ENCODE measurements at regions of chr10 and their contacts with region 1.

Region 1: GRCh38 chr10:4767033-4767814 is 58.8 kb upstream of the AKR1E2 start:
- DNase-seq: peak; percentile 46
- H3K4me3 ChIP-seq: no peak overlapping the region
- H3K27ac ChIP-seq: peak overlapping the region; percentile 96
- H3K4me1 ChIP-seq: peaks cover 63% of the 10 kb centered on the region
- H3K27me3 ChIP-seq: no peaks in the 10 kb centered on the region
- CTCF ChIP-seq: peak; percentile 71 to 76

Region 2: GRCh38 chr10:3222065-3222464 is 1545.2 kb before region 1 on chr10:
- CTCF ChIA-PET with region 1: interaction called, 5 read pairs
- dilution Hi-C with region 1: loop called (anchors 25 kb)
- in situ Hi-C with region 1: loop called in 1 of 2 experiments (anchors 25 kb)
- intact Hi-C with region 1: no loop called
- DNase-seq: no peak
- H3K4me3 ChIP-seq: no peak overlapping the region
- H3K27ac ChIP-seq: no peak overlapping the region
- H3K4me1 ChIP-seq: peaks cover 21% of the 10 kb centered on the region
- H3K27me3 ChIP-seq: no peaks in the 10 kb centered on the region
- CTCF ChIP-seq: no peak

Region 3: DNA sequence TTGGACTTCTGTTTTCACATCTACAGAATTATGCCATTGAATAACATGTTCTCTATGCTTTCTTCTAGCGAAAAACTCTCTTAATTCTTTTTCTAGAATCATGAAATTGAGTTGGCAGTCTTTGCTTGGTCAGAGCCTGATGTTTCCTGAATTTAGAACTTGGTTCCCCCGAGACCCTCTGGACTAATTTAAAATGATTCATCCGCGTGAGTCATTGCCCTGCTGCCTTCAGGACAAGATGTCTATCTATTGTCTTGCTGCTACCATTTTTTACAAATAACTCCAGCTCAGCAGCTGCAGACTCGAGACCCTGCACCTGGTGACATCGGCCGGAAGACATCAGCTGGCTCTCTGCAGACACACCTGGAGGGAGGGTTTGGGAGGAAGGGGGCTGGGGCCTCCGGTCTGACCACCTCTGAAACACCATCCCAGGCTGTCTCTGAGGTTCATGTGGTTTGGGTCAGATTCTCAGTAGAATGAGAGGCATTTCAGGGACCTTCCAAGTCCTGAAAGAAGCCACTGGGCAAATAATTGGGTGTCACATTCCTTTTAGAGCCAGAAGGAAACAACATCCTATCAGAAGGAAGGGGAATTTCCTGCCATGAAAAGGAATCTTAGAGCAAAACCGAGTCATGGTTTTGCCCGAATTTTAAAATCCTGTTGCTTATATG is 961.3 kb before region 1 on chr10:
- CTCF ChIA-PET with region 1: no interaction called
- dilution Hi-C with region 1: loop called (anchors 10 kb)
- in situ Hi-C with region 1: no loop called
- intact Hi-C with region 1: loop called (anchors 1 kb)
- DNase-seq: peak; percentile 90
- H3K4me3 ChIP-seq: no peak overlapping the region
- H3K27ac ChIP-seq: peak overlapping the region; percentile 100
- H3K4me1 ChIP-seq: peaks cover 49% of the 10 kb centered on the region
- H3K27me3 ChIP-seq: no peaks in the 10 kb centered on the region
- CTCF ChIP-seq: no peak

Region 4: DNA sequence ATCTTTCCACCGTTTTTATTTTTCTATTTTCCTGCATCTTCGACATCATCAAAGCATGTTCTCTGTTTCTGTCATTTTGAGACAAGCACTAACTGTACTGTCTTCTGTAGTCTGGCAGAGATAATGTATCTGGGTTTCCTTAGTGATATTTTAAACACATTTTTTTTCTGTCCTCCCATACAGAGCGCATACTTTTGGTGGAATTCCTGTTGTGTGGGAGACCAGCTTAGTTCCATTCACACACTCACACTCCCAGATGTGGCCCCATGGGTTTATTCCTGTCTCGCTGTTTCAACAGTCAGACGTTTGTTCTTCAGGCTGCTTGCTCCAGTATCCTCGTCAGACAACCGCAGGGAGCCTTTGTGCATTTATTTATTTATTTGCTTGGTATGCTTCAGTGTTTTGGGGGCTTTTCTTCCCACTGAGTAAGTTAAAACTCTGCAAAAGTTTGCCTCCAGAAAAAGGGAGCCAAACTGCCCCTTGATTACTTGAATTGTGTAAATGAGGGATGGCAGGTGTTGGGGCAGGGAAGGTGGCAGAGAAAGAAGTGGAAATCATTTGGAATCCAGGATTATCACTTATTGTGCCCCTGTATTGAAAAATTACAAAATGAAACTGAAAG is 525.4 kb before region 1 on chr10:
- CTCF ChIA-PET with region 1: no interaction called
- dilution Hi-C with region 1: loop called (anchors 10 kb)
- in situ Hi-C with region 1: no loop called
- intact Hi-C with region 1: loop called (anchors 2 kb)
- DNase-seq: peak; percentile 94
- H3K4me3 ChIP-seq: peak overlapping the region; percentile 27 to 51 (median 46)
- H3K27ac ChIP-seq: peak overlapping the region; percentile 97
- H3K4me1 ChIP-seq: peaks cover 47% of the 10 kb centered on the region
- H3K27me3 ChIP-seq: no peaks in the 10 kb centered on the region
- CTCF ChIP-seq: no peak

Region 5: DNA sequence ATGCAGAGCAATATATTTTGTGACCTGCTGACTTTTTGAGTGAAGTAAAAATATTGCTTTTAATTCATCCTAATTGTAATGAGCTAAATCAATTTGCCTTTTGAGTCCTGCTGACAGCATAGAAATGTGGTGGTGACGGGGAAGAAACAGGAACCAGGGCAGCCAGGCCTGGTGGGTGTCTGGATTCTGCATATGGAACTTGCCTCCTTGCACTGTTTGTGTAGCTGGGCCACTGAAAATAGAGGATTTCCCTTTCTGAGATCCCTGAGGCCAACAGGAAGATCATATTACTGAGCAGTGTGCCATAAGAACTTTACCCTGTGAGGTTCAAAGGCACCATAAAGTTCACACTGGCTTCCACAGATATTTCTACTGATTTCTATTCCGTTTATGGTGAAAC is 429.7 kb before region 1 on chr10:
- CTCF ChIA-PET with region 1: no interaction called
- dilution Hi-C with region 1: no loop called
- in situ Hi-C with region 1: no loop called
- intact Hi-C with region 1: no loop called
- DNase-seq: no peak
- H3K4me3 ChIP-seq: no peak overlapping the region
- H3K27ac ChIP-seq: no peak overlapping the region
- H3K4me1 ChIP-seq: no peaks in the 10 kb centered on the region
- H3K27me3 ChIP-seq: no peaks in the 10 kb centered on the region
- CTCF ChIP-seq: no peak

Region 6: DNA sequence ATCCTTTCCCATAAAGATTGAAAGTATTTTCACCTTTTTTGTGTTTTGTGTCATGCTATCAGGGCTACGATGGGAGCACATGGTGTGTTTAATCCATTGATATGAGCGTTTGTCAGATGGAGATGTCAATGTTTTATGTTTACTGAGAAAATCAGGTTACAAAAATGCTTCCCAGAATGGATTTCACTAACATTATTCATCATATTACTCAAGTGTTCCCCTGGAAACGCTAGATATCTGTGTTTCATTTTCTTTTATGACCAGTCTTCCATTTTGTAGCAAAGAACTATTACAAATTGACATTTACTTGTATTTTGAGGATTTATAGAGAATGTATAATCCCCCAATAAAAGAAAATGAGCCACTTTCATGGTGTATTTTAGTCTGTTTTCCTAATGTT is 234.8 kb before region 1 on chr10:
- CTCF ChIA-PET with region 1: no interaction called
- dilution Hi-C with region 1: no loop called
- in situ Hi-C with region 1: no loop called
- intact Hi-C with region 1: loop called (anchors 5 kb)
- DNase-seq: peak; percentile 46
- H3K4me3 ChIP-seq: no peak overlapping the region
- H3K27ac ChIP-seq: peak overlapping the region; percentile 91
- H3K4me1 ChIP-seq: peaks cover 21% of the 10 kb centered on the region
- H3K27me3 ChIP-seq: no peaks in the 10 kb centered on the region
- CTCF ChIP-seq: no peak

Region 7: GRCh38 chr10:4671451-4672145 is 95.6 kb before region 1 on chr10:
- CTCF ChIA-PET with region 1: interaction called, 4 read pairs
- dilution Hi-C with region 1: loop called (anchors 5 kb)
- in situ Hi-C with region 1: loop called in 1 of 2 experiments (anchors 25 kb)
- intact Hi-C with region 1: loop called (anchors 1 kb)
- DNase-seq: peak; percentile 98
- H3K4me3 ChIP-seq: peak overlapping the region; percentile 35 to 41 (median 38)
- H3K27ac ChIP-seq: peak overlapping the region; percentile 100
- H3K4me1 ChIP-seq: peaks cover 51% of the 10 kb centered on the region
- H3K27me3 ChIP-seq: no peaks in the 10 kb centered on the region
- CTCF ChIP-seq: no peak

Region 8: DNA sequence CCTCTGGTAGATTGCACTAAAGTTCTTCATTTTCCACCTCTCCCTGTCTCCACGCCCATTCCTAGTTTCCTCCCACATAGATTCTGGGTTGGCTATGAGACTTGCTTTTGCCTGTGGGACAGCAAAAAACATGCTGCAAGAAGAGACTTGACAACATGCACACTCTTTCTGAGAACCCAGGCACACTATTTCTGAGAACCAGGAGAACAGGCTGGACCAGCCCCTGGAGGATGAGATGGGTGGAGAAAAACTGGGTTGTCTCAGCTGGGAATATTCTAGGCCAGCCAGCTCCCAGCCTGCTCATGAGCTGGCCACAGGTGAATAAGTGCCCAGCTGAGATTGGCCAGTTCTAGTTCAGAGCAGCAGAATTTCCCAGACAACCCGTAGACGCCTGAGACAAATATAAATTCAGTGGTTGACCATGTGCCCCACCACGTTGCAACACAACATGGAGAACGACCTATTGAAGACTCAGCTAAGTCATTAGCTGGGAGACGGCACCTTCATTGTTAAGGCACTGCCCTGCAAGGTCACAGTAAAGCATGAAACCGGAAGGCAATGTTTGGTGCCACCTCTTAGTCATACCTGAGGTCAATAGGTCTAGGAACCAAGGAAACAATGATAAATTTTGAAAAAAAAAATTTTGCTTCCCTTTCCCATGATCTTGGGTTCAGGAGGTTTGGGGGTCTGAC is 33.9 kb before region 1 on chr10:
- CTCF ChIA-PET with region 1: interaction called, 4 read pairs
- dilution Hi-C with region 1: no loop called
- in situ Hi-C with region 1: no loop called
- intact Hi-C with region 1: loop called (anchors 2 kb)
- DNase-seq: peak; percentile 96
- H3K4me3 ChIP-seq: no peak overlapping the region
- H3K27ac ChIP-seq: peak overlapping the region; percentile 62
- H3K4me1 ChIP-seq: peaks cover 14% of the 10 kb centered on the region
- H3K27me3 ChIP-seq: no peaks in the 10 kb centered on the region
- CTCF ChIP-seq: peak in 1 of 2 donors; percentile 21

Region 9: DNA sequence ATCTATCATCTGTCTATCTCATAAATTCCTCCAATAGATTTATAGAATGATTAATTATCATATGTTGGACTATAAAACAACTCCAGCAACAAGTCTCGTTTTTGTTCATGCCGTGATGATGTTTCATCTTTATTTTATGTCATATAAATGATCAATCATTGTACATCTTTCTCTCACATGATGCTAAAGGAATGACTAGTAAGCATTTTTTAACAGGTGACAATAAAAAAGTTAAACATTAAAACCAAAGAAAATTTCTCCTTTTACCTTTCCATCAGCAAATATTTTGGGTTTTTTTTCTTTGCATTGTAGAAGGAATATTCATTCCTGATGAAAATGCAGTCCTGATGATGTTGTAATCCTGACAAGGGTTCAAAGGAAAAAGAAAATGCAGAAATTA is 368.4 kb after region 1 on chr10:
- CTCF ChIA-PET with region 1: no interaction called
- dilution Hi-C with region 1: no loop called
- in situ Hi-C with region 1: no loop called
- intact Hi-C with region 1: no loop called
- DNase-seq: no peak
- H3K4me3 ChIP-seq: no peak overlapping the region
- H3K27ac ChIP-seq: no peak overlapping the region
- H3K4me1 ChIP-seq: no peaks in the 10 kb centered on the region
- H3K27me3 ChIP-seq: no peaks in the 10 kb centered on the region
- CTCF ChIP-seq: no peak